ENCODE measurements at regions of chr17 and their contacts with region 1.

Region 1: GRCh38 chr17:38868817-38869525 is 887 bp upstream of the LASP1 start:
- DNase-seq: peak; percentile 82
- H3K4me3 Mint-ChIP-seq: peak overlapping the region; percentile 93
- H3K27ac Mint-ChIP-seq: peak overlapping the region; percentile 90
- H3K4me1 Mint-ChIP-seq: peaks cover 41% of the 10 kb centered on the region
- H3K27me3 Mint-ChIP-seq: no peaks in the 10 kb centered on the region

Region 2: DNA sequence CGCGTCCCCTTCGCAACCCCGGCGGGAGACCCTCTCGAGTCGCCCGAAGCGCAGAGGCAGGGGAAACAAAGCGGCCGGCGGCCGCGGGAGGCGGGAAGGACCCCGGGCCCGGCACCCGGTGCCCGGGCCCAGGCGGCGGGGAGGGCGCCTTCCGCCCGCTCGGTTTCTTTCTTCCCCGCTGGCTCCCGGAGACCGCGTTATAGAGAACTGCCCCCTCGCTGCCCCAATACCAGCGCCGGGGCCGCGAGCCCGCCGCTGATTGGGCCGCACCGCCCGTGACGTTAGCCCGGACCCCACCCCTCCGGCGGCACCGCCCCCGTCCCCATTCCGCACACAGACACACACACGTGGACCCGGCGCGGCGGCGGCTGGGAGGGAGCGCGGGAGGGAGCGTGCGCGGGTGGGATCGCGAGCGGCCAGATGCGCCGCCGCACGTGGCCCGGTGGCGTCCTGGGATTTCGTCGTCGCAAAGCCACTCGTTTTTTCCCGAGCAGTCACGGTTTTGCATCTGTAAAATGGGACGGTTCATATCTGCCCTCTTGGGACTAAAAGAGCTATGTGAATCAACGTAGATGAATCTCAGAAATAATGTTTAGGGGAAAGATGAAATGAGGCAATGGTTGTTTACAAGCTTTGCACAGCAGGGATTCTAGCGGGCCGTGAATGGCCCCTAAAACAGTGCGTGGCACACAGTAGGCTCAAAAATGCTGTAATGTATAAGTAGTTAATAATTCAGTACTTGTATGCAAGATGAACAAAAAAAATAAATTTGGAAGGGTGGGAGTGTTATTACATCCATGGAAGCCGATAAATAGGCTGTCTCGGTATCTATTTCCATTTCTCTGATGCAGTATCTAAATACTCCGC is 194.0 kb before region 1 on chr17 and contains the start of gene EPOP:
- intact Hi-C with region 1: loop called (anchors 5 kb)
- DNase-seq: peak; percentile 88
- H3K4me3 Mint-ChIP-seq: peak within 1 kb of the TSS; percentile 57
- H3K27ac Mint-ChIP-seq: peak within 1 kb of the TSS; percentile 70
- H3K4me1 Mint-ChIP-seq: peaks cover 37% of the 10 kb centered on the region
- H3K27me3 Mint-ChIP-seq: peaks cover 19% of the 10 kb centered on the region
- total RNA-seq, gene EPOP: 34.9 TPM in 2 replicates

Region 3: DNA sequence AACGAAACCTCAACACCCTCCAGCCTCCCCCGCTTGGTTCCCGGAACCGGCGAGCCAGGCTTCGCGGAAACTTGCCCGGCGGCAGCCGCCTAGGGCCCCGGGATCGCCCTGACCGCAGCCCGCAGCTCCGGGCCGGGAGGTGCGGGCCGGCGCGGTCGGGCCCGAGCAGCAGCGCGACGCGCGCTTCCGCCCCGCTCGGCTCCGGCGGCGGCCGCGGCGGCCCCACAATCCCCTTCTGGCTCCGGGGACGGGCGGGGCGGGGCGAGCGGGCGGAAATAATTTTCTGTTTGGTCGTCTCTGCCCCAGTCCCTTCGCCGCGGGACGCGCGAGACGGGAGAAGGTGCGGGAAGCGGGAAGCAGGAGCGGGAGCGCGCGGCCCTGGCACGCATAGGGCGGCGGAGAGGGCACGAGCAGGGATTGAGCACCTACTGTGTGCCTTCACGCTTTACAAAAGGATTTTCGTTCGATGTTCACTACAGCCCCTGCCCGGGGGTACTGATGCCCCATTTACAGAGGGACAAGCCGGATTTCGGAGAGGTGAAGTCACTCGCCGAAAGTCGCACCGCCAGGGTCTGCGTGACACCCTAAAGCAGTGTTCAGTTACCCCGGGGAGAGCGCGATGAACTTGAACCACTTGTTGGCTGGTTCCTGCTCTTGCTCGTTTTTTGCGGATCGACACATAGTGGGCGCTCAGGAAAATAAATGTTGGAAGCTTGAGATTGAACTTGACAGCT is 166.6 kb before region 1 on chr17:
- intact Hi-C with region 1: loop called (anchors 5 kb)
- DNase-seq: peak; percentile 74
- H3K4me3 Mint-ChIP-seq: peak overlapping the region; percentile 96
- H3K27ac Mint-ChIP-seq: peak overlapping the region; percentile 99
- H3K4me1 Mint-ChIP-seq: peaks cover 46% of the 10 kb centered on the region
- H3K27me3 Mint-ChIP-seq: no peaks in the 10 kb centered on the region

Region 4: GRCh38 chr17:38799378-38800236 is 69.4 kb before region 1 on chr17 and contains the start of gene PIP4K2B:
- intact Hi-C with region 1: loop called (anchors 5 kb)
- DNase-seq: peak; percentile 86
- H3K4me3 Mint-ChIP-seq: peak within 1 kb of the TSS; percentile 98
- H3K27ac Mint-ChIP-seq: peak within 1 kb of the TSS; percentile 91
- H3K4me1 Mint-ChIP-seq: peaks cover 30% of the 10 kb centered on the region
- H3K27me3 Mint-ChIP-seq: no peaks in the 10 kb centered on the region
- total RNA-seq, gene PIP4K2B: 35.3 and 45.3 TPM in 2 replicates

Region 5: DNA sequence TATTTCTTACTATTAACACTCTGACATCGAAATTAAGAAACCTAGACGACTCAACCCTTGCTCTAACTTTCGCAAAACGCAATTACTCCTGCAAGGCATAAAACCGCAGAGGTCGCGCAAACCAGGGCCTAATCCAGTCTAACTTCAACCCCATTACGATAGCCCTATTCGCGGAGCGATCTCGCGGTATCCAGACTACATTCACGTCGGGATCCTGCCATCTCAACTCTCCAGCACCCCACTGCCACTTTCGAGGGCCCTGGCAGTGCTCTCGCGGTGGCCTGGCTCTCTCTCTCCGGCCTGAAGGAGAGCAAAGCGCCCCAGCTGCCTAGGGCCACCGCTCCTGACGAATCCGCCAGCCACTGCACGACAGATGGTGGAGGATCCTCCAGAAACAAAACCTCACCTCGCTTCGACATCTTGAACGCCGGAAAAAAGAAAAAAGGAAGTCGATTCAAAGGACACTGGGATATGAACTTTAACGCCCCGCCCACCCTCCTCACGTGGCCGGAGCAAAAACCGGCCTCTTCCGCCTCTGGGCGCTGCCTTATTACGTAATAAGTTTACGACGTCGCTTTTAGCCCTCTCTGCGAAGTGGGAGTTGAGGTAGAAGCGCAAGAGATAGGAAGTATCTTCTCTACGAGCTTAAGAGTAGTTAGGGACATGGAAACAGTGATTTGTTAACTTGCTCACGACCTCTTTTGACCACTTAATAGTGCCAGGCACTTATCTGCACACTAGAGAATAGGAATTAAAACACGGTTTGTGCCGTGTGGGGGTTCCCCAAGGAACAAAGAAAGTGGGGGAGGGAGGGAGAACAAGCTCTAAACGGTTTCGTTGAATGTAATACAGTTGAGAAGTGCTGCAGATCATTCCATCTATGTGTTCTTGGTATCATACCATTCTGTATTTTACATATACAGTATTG is 15.4 kb before region 1 on chr17 and contains the start of gene RPL23:
- intact Hi-C with region 1: loop called (anchors 1 kb)
- DNase-seq: peak; percentile 90
- H3K4me3 Mint-ChIP-seq: peak within 1 kb of the TSS; percentile 98
- H3K27ac Mint-ChIP-seq: peak within 1 kb of the TSS; percentile 98
- H3K4me1 Mint-ChIP-seq: peaks cover 26% of the 10 kb centered on the region
- H3K27me3 Mint-ChIP-seq: no peaks in the 10 kb centered on the region
- total RNA-seq, gene RPL23: 1,775 and 1,796 TPM in 2 replicates

Region 6: DNA sequence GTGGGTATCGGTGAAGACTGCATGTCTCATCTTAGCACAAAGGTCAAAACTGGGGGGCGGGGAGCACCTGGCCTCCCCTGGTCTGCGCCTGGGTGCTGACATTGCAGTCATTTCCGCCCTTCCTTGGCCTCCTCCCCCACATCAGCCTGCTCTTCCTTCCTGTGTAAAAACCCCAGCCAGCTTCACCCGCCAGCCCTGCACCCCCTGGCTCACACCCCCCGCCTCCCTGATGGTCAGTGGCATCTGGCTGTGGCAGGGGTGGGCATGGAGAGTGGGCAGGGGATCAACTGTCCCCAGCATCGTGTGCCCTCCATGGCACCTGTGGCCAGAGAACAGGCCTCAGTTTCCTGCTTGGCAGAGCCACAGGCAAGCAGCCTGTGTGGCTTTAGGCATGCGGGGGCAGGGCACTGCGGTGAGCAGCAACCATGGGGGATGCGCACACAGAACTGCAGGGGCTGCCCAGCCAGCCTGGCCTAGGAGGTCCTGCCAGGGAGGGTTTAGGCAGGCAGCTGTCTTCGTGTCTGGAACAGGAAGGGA is 29.9 kb after region 1 on chr17:
- intact Hi-C with region 1: loop called (anchors 1 kb)
- DNase-seq: peak; percentile 75
- H3K4me3 Mint-ChIP-seq: peak overlapping the region; percentile 73
- H3K27ac Mint-ChIP-seq: peak overlapping the region; percentile 98
- H3K4me1 Mint-ChIP-seq: peaks cover 50% of the 10 kb centered on the region
- H3K27me3 Mint-ChIP-seq: no peaks in the 10 kb centered on the region

Region 7: DNA sequence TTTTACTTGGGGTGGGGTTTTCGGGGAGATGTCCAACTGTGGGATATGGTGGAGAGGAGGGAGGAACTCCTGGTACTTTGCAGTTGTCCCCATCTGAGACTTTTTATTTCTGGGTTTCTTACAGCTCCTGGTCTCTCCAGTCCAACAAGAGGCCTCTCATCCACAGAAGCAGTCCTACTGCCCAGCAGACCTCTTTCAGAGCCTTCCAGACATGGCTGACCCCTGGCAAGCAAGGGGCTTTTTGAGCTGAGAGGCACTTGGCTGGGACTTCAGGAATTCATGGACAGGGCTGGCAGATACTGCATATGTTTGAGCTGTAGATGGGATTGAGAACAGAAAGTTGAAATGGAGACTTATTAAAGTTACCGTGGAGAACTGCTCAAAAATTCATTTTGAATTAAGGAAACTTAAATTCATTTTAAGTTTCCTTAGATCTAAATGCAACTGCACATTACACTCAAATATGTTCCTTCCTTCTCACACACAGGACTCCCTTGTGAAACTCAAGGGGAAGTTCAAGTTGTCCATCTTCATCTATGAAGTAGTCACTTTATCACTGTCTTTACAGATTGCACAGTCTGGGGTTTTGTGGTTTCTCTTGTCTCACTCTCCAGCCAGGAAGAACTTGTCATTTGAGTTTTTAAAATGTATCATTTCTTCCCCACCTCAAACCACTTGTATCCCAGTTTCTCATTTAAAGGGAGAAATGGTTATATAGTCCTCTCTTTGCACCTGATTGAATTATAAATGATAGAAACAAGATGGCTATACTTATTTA is 57.5 kb after region 1 on chr17:
- intact Hi-C with region 1: loop called (anchors 2 kb)
- DNase-seq: no peak
- H3K4me3 Mint-ChIP-seq: peak overlapping the region; percentile 23
- H3K27ac Mint-ChIP-seq: peak overlapping the region; percentile 44
- H3K4me1 Mint-ChIP-seq: peaks cover 24% of the 10 kb centered on the region
- H3K27me3 Mint-ChIP-seq: no peaks in the 10 kb centered on the region